Posterior vena cava (tissue), 2 donors: ENCODE measurements at regions of chr1 and their contacts with region 1.

Region 1: GRCh38 chr1:67616394-67616985 is 68.5 kb upstream of the GADD45A start:
- DNase-seq: no peak

Region 2: GRCh38 chr1:67596674-67597073 is 19.8 kb before region 1 on chr1:
- intact Hi-C with region 1: loop called in 1 of 2 experiments (anchors 1 kb)
- DNase-seq: no peak